T-cell (primary cell): ENCODE measurements at regions of chr1 and their contacts with region 1.

Region 1: GRCh38 chr1:159214149-159214760 is 9.6 kb downstream of the ACKR1 start:
- DNase-seq: peak in 16 of 35 experiments; percentile 4 to 57 (median 18)
- ATAC-seq: peak in 1 of 4 experiments; percentile 54
- H3K4me3 ChIP-seq: no peak overlapping the region
- H3K4me3 Mint-ChIP-seq: no peak overlapping the region
- H3K27ac ChIP-seq: no peak overlapping the region
- H3K27ac Mint-ChIP-seq: no peak overlapping the region
- H3K4me1 ChIP-seq: no peaks in the 10 kb centered on the region
- H3K4me1 Mint-ChIP-seq: peaks cover 0 to 3% (median 0%) of the 10 kb centered on the region in 3 donors
- H3K27me3 ChIP-seq: peaks cover 2 to 23% of the 10 kb centered on the region in 2 experiments
- H3K27me3 Mint-ChIP-seq: peaks cover 46 to 55% of the 10 kb centered on the region in 2 donors

Region 2: GRCh38 chr1:159132271-159132881 is 81.9 kb before region 1 on chr1:
- CTCF ChIA-PET with region 1: interaction called, 3 to 11 read pairs
- POLR2A ChIA-PET with region 1: no interaction called
- DNase-seq: peak; percentile 15 to 72 (median 54)
- ATAC-seq: peak in 1 of 4 experiments; percentile 56
- H3K4me3 ChIP-seq: no peak overlapping the region
- H3K4me3 Mint-ChIP-seq: no peak overlapping the region
- H3K27ac ChIP-seq: no peak overlapping the region
- H3K27ac Mint-ChIP-seq: no peak overlapping the region
- H3K4me1 ChIP-seq: no peaks in the 10 kb centered on the region
- H3K4me1 Mint-ChIP-seq: no peaks in the 10 kb centered on the region
- H3K27me3 ChIP-seq: peaks cover 3 to 5% of the 10 kb centered on the region in 2 experiments
- H3K27me3 Mint-ChIP-seq: peaks cover 6% of the 10 kb centered on the region in 2 donors

Region 3: GRCh38 chr1:159200769-159201168 is 13.5 kb before region 1 on chr1:
- CTCF ChIA-PET with region 1: interaction called, 4 to 6 read pairs
- POLR2A ChIA-PET with region 1: interaction called in 1 of 2 experiments, 11 read pairs
- DNase-seq: no peak
- ATAC-seq: no peak
- H3K4me3 ChIP-seq: no peak overlapping the region
- H3K4me3 Mint-ChIP-seq: peak overlapping the region in 1 of 3 donors; percentile 37
- H3K27ac ChIP-seq: no peak overlapping the region
- H3K27ac Mint-ChIP-seq: no peak overlapping the region
- H3K4me1 ChIP-seq: peaks cover 2 to 12% of the 10 kb centered on the region in 2 experiments
- H3K4me1 Mint-ChIP-seq: peaks cover 2 to 16% (median 3%) of the 10 kb centered on the region in 3 donors
- H3K27me3 ChIP-seq: peaks cover 0 to 53% of the 10 kb centered on the region in 2 experiments
- H3K27me3 Mint-ChIP-seq: peaks cover 55 to 66% of the 10 kb centered on the region in 2 donors

Region 4: GRCh38 chr1:159229486-159229885 is 15.2 kb after region 1 on chr1:
- CTCF ChIA-PET with region 1: interaction called, 3 to 11 read pairs
- POLR2A ChIA-PET with region 1: no interaction called
- DNase-seq: no peak
- ATAC-seq: no peak
- H3K4me3 ChIP-seq: no peak overlapping the region
- H3K4me3 Mint-ChIP-seq: no peak overlapping the region
- H3K27ac ChIP-seq: no peak overlapping the region
- H3K27ac Mint-ChIP-seq: no peak overlapping the region
- H3K4me1 ChIP-seq: no peaks in the 10 kb centered on the region
- H3K4me1 Mint-ChIP-seq: no peaks in the 10 kb centered on the region
- H3K27me3 ChIP-seq: peaks cover 0 to 11% of the 10 kb centered on the region in 2 experiments
- H3K27me3 Mint-ChIP-seq: peaks cover 11 to 23% of the 10 kb centered on the region in 2 donors

Region 5: GRCh38 chr1:159307346-159308020 is 93.2 kb after region 1 on chr1:
- CTCF ChIA-PET with region 1: no interaction called
- POLR2A ChIA-PET with region 1: no interaction called
- DNase-seq: no peak
- ATAC-seq: no peak
- H3K4me3 ChIP-seq: no peak overlapping the region
- H3K4me3 Mint-ChIP-seq: no peak overlapping the region
- H3K27ac ChIP-seq: no peak overlapping the region
- H3K27ac Mint-ChIP-seq: no peak overlapping the region
- H3K4me1 ChIP-seq: no peaks in the 10 kb centered on the region
- H3K4me1 Mint-ChIP-seq: no peaks in the 10 kb centered on the region
- H3K27me3 ChIP-seq: no peaks in the 10 kb centered on the region
- H3K27me3 Mint-ChIP-seq: peaks cover 22 to 23% of the 10 kb centered on the region in 2 donors

Region 6: GRCh38 chr1:159577446-159577845 is 363.2 kb after region 1 on chr1:
- CTCF ChIA-PET with region 1: no interaction called
- POLR2A ChIA-PET with region 1: no interaction called
- DNase-seq: no peak
- ATAC-seq: no peak
- H3K4me3 ChIP-seq: no peak overlapping the region
- H3K4me3 Mint-ChIP-seq: no peak overlapping the region
- H3K27ac ChIP-seq: no peak overlapping the region
- H3K27ac Mint-ChIP-seq: no peak overlapping the region
- H3K4me1 ChIP-seq: no peaks in the 10 kb centered on the region
- H3K4me1 Mint-ChIP-seq: no peaks in the 10 kb centered on the region
- H3K27me3 ChIP-seq: peaks cover 0 to 10% of the 10 kb centered on the region in 2 experiments
- H3K27me3 Mint-ChIP-seq: peaks cover 23 to 30% of the 10 kb centered on the region in 2 donors